ENCODE measurements at regions of chr9 and their contacts with region 1.

Region 1: GRCh38 chr9:112717661-112718341 is at the start of gene INIP:
- DNase-seq: peak; percentile 91 to 94
- ATAC-seq: peak; percentile 99
- H3K4me3 ChIP-seq: peak within 1 kb of the TSS; percentile 76 to 96 (median 84)
- H3K27ac ChIP-seq: peak within 1 kb of the TSS; percentile 86 to 95 (median 90)
- H3K4me1 ChIP-seq: peaks cover 5 to 11% of the 10 kb centered on the region in 2 donors
- H3K27me3 ChIP-seq: no peaks in the 10 kb centered on the region
- CTCF ChIP-seq: peak in 1 of 5 experiments; percentile 21
- POLR2A ChIP-seq: peak; percentile 66 to 74
- total RNA-seq, gene INIP: 6.0 to 13.4 (median 7.8) TPM

Region 2: DNA sequence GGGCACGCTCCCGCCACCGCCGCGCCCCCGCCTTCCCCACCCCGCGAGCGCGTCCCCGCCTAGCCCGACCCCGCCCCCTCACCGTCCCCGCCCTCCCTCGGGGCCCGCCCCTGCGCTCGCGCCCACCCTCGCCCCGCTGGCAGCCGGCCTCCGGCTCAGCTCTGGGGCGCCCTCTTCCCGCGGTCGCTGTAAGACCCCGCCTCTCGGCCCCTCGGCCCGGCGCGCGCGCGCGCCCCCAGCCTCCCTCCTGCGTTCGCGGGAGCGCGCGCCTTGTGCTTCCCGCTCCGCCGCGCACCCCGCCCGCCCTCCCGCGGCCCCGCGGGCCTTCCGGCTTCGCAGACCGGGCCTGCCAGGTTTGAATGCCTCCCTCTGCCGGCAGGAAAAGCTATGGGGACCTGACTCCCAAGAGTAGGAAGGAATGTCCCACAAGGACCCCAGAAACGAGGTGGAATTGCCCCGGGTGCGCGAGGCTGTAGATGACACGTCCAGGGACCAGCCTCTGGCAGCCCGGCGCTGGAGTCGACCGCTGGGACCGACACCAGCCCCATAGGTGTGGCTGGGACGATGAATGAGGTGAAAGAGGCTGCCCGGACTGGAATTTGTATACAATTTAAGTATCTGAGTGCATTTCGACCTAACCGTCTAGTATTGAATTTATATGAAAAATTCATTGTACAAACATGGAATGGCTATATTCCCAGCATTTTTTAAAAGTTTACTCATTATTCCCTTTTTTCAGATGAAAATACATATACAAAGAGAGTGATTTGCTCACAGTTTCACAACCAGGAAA is 384.0 kb before region 1 on chr9:
- in situ Hi-C with region 1: no loop called
- intact Hi-C with region 1: loop called (anchors 2 kb)
- DNase-seq: peak; percentile 84 to 91
- ATAC-seq: peak; percentile 89
- H3K4me3 ChIP-seq: peak overlapping the region; percentile 67 to 96 (median 88)
- H3K27ac ChIP-seq: peak overlapping the region; percentile 84 to 99 (median 97)
- H3K4me1 ChIP-seq: peaks cover 9 to 16% of the 10 kb centered on the region in 2 donors
- H3K27me3 ChIP-seq: no peaks in the 10 kb centered on the region
- CTCF ChIP-seq: peak; percentile 45 to 78 (median 57)
- POLR2A ChIP-seq: no peak

Region 3: DNA sequence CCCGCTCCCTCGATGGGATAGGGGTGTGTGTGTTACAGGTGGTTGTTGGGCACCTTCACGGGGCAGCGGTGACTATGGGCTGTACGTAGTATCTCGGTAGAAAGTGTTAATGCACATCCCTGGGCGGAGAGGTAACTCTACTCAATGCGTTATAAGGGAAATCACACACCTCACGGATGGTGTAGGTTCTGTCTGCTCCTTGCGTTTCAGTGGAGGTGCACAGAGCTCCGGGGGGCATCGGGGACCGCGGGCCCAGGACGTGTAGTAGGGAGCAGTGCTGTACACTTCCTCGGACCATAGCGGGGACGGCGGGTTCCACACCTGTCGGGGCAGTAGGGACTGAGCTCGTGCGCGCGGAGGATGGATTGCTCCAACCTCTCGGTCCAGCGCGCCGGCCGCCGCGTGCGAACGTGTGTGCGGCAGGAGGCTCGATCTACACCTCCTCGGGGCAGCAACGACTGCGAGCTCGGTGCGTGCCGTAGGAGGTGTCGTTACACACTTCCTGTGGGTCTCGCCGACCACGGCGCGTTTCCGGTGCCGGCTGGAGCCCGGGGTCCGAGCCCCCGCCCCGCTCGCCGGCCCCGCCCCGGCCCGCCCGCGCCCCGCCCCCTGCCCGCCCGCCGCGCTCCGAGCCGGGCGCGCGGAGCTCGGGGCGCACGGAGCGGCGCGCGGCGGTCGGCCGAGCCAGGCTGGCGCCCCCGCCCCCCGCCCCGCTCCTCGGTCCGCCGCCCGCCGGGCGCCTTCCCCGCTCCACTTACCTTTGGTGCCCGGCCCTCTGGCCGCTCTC is 231.4 kb before region 1 on chr9 and contains the start of gene KIAA1958:
- in situ Hi-C with region 1: no loop called
- intact Hi-C with region 1: loop called (anchors 5 kb)
- DNase-seq: peak; percentile 40 to 69
- ATAC-seq: peak; percentile 76 to 78
- H3K4me3 ChIP-seq: peak within 1 kb of the TSS; percentile 70 to 86 (median 80)
- H3K27ac ChIP-seq: peak within 1 kb of the TSS; percentile 64 to 77 (median 72)
- H3K4me1 ChIP-seq: peaks cover 3 to 11% of the 10 kb centered on the region in 2 donors
- H3K27me3 ChIP-seq: no peaks in the 10 kb centered on the region
- CTCF ChIP-seq: no peak
- POLR2A ChIP-seq: peak in 1 of 2 donors; percentile 35
- total RNA-seq, gene KIAA1958: 1.3 to 4.0 (median 2.6) TPM

Region 4: DNA sequence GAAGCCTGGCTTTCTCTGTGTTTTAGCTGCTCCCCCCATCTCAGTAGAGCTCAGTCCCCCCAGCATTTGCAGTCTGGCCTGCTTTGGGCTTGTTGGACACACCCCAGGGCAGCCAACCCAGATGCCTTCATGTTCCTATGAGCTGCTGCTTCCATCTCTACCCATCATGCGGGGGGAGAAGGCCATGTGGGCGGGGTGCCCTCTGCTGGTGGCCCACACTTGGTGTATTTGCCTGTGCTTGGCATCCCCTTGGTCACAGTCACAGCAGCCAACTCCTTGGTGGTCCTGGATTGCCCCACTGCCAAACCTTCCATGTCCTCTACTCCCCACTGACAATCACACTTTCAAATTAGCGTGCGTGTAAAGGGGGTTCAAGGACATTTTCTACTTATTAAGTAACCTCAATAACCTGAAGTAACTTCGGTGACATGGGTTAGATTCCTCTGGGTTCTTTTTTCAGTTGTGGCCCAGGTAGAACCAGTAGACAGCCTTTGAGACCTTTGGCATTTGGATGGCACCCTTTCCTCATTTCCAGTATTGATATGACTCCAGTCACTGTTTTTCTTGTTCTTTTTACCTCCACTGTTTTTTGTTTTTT is 75.5 kb after region 1 on chr9:
- in situ Hi-C with region 1: no loop called
- intact Hi-C with region 1: loop called (anchors 5 kb)
- DNase-seq: peak; percentile 44 to 50
- ATAC-seq: peak; percentile 63 to 76
- H3K4me3 ChIP-seq: no peak overlapping the region
- H3K27ac ChIP-seq: no peak overlapping the region
- H3K4me1 ChIP-seq: no peaks in the 10 kb centered on the region
- H3K27me3 ChIP-seq: no peaks in the 10 kb centered on the region
- CTCF ChIP-seq: peak; percentile 65 to 81 (median 69)
- POLR2A ChIP-seq: no peak

Region 5: DNA sequence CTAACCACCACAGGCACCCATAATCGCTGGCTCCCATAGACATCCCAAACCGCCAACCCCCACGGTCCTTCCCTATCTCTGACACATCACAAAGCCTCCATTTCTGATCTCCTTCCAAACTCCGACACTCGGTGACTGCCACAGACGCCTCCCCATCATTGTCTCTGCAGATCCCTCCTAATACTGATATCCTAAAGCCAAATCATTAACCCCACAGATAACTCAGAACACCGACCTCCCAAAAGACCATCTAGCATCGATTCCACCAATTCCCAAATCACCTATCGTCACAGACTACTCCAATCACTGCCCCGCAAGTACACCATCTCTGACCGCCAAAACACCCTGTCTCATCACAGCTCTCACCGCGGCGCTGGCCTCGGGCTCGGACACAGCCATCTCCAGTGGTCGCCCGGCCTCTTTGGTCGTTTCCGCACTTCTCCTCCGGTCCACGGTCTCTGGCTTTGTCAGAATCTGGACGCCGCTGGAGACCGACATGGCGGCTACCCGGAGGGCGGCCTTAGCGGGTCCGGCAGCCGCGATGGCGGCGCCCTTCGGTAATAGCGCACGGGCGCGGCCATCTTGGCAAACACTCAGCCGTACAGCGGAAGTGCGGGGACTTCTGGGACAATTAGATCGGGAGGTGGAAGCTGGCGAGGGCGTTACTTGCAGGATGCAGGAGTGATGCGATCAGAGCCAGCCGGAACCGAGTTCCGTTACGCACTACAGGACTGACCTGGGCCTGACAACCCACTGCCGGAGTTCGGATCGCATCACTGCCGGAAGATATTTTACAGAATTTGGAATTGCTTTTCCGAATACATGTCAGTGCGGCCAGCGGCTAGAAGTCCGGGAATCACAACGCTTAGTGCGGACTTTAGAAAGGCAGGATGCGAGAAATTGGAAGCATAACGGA is 338.6 kb after region 1 on chr9 and contains the start of gene ZFP37:
- in situ Hi-C with region 1: no loop called
- intact Hi-C with region 1: loop called (anchors 10 kb)
- DNase-seq: peak; percentile 84 to 86
- ATAC-seq: peak; percentile 97 to 99
- H3K4me3 ChIP-seq: peak within 1 kb of the TSS; percentile 84 to 89 (median 86)
- H3K27ac ChIP-seq: peak within 1 kb of the TSS; percentile 68 to 76 (median 73)
- H3K4me1 ChIP-seq: peaks cover 5 to 9% of the 10 kb centered on the region in 2 donors
- H3K27me3 ChIP-seq: peaks cover 5 to 32% (median 17%) of the 10 kb centered on the region in 3 donors
- CTCF ChIP-seq: no peak
- POLR2A ChIP-seq: peak; percentile 15 to 16
- total RNA-seq, gene ZFP37: 0.49 to 2.6 (median 1.7) TPM